HEK293 (cell line): ENCODE measurements at regions of chr2 and their contacts with region 1.

Region 1: DNA sequence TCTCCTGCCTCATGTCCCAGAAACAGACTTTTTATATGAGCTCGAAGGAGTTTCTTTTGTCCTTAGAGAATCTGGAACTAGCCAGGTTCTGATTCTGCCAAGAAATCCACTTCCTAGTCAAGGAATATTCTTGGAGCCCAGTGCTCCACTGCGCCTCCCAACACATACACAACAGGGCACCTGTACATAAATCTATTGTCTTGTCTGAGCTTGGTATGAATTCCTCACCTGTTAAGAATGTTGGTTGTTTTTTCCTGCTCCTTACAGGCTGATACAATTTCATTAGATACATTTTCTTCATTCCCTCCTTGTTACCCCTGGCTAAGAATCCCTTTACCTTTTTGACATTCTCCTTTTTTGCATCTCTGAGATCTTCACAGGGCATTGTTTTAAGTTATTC is 56.0 kb upstream of the FZD7 start:
- H3K4me3 ChIP-seq: no peak overlapping the region
- H3K27ac ChIP-seq: no peak overlapping the region
- H3K4me1 ChIP-seq: no peaks in the 10 kb centered on the region
- CTCF ChIP-seq: no peak

Region 2: GRCh38 chr2:201888426-201888800 is 89.2 kb before region 1 on chr2:
- CTCF ChIA-PET with region 1: no interaction called
- POLR2A ChIA-PET with region 1: interaction called, 14 read pairs
- H3K4me3 ChIP-seq: no peak overlapping the region
- H3K27ac ChIP-seq: peak overlapping the region; percentile 13
- H3K4me1 ChIP-seq: peaks cover 32% of the 10 kb centered on the region
- CTCF ChIP-seq: no peak

Region 3: DNA sequence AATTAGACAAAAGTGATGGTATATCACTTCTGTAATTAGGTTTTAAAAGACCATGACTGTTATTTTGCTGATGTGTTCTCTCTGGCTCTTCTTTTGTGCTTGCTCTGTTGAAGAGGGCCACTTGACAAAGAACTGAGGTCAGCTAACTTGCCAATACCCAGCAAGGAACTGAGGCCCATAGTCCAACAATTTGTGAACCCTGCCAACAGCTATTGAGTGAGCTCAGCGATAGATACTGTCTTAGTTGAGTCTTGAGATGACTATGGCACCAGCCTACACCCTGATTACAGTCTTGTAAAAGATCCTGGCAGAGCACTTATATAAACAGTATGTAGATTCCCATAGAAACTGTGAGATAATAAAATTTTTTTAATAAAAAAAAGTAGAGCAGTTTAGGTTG is 501.5 kb after region 1 on chr2:
- CTCF ChIA-PET with region 1: no interaction called
- POLR2A ChIA-PET with region 1: no interaction called
- H3K4me3 ChIP-seq: no peak overlapping the region
- H3K27ac ChIP-seq: no peak overlapping the region
- H3K4me1 ChIP-seq: no peaks in the 10 kb centered on the region; the same call in 1 of the 2 replicates
- CTCF ChIP-seq: no peak